Dendritic cell treated with granulocyte-macrophage colony-stimulating factor and Interleukin-4, amounts not matched to agents 40 ng/mL and 50 ng/mL, for 4 days (primary cell): ENCODE measurements at regions of chr7 and their contacts with region 1.

Region 1: DNA sequence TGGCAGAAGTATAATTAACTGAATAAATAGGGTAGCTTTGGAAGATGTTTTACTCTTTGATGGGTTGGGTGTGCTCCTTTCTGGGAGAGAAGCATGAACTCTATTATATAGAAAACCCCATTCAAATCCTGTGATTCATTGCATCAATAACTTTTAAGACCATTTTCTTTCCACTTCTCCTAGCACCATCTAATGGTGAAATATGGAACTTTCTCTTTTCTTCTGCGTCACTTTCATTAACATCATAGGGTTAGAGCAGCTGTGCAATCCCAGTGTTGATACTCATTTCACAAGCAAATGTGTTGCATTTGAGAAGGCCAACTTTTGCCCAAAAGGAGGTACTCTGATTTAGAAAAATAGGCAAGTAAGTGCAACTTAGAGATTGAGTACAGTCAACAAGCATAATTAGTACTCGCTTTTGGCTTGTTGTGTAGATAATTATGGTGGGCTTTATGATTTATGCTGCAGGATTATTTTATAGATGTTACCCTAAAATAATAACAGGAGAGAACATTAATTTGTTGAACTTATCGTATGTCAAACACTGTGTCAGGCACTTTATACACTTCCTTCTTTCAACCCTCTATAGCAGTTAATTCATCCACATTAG is 92.9 kb downstream of the CPED1 start:
- H3K4me3 Mint-ChIP-seq: no peak overlapping the region
- H3K27ac Mint-ChIP-seq: no peak overlapping the region
- H3K4me1 Mint-ChIP-seq: peaks cover 6% of the 10 kb centered on the region
- H3K27me3 Mint-ChIP-seq: no peaks in the 10 kb centered on the region

Region 2: DNA sequence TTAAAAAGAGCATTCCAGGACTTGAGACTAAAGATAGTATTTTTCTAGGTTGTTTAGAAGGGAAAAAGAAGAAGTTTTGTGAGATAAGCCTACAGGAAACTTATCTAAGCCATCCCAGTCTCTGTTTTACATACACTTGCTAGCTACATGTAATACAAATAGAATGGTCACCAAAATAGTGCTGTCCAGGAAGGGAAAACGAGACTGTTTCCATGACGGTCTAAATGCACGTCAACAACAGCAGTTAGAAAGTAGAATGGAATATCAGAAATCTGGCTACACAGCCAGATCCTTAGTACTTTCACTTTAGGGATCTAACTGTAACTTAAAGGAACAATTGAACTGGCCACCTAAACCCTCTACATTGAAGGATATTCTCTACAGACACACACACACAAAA is 341.1 kb before region 1 on chr7:
- intact Hi-C with region 1: no loop called
- H3K4me3 Mint-ChIP-seq: no peak overlapping the region
- H3K27ac Mint-ChIP-seq: no peak overlapping the region
- H3K4me1 Mint-ChIP-seq: no peaks in the 10 kb centered on the region
- H3K27me3 Mint-ChIP-seq: no peaks in the 10 kb centered on the region

Region 3: DNA sequence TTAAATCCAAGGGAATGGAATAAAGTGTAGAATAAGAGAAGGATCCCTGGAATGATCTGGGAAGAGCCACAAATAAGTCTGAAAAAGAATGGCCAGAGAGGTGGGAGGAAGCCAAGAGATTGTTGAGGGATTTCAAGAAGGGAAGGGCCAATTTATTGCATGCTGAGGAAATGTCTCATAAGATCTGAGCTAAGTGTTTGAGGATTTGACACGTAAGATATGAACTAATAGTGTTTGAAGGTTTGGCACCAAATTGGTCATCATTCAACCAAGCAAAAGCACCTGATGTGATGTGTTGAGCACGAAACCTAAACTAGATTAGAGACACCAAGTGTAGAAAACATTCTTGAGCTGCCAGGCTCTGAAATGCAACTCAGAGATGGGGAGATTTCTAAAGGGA is 321.4 kb before region 1 on chr7:
- intact Hi-C with region 1: no loop called
- H3K4me3 Mint-ChIP-seq: no peak overlapping the region
- H3K27ac Mint-ChIP-seq: no peak overlapping the region
- H3K4me1 Mint-ChIP-seq: no peaks in the 10 kb centered on the region
- H3K27me3 Mint-ChIP-seq: peaks cover 4% of the 10 kb centered on the region

Region 4: DNA sequence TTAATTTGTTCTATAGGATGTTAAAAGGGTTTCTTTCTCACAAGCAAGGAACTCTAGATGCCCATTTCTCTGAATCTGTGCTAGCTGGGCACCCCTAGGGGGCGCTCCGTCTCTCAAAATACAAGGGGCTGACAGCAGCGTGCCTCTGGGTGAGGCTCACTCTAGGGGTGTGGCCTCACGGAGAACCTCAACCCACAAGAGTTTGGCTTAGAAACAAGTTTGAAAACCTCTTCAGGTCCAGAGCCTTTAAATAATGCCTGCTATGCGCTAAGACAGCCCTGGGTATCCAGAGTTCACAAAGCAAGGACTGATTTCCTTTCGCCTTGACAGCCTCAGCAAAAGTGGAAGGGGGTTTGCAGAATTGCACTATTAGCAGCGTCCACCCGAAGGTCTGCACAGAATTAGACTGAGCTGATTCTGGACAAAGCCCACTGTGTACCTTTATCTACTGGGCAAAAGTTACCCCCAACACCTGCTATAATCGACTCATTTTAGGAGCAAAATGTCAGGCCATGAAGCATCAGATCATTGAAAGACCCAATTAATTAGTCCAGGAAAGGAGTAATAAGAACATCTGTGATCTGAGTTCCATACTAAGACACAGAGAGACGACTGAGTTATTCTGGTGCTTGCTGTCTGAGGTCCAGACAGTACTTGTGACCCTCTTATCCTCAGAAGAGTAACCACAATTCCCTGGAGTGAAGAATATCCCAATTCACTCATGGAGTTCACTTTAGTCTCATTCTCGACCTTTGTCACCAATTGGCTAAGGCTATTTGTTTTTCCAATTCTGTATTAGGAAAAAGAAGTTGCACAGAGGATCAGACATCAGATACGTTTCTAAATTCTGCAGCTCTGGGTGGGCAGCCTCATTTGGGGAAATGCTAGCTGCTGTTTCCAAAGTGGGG is 93.5 kb before region 1 on chr7:
- intact Hi-C with region 1: loop called (anchors 1 kb)
- H3K4me3 Mint-ChIP-seq: peak overlapping the region; percentile 88
- H3K27ac Mint-ChIP-seq: peak overlapping the region; percentile 74
- H3K4me1 Mint-ChIP-seq: peaks cover 20% of the 10 kb centered on the region
- H3K27me3 Mint-ChIP-seq: peaks cover 7% of the 10 kb centered on the region

Region 5: DNA sequence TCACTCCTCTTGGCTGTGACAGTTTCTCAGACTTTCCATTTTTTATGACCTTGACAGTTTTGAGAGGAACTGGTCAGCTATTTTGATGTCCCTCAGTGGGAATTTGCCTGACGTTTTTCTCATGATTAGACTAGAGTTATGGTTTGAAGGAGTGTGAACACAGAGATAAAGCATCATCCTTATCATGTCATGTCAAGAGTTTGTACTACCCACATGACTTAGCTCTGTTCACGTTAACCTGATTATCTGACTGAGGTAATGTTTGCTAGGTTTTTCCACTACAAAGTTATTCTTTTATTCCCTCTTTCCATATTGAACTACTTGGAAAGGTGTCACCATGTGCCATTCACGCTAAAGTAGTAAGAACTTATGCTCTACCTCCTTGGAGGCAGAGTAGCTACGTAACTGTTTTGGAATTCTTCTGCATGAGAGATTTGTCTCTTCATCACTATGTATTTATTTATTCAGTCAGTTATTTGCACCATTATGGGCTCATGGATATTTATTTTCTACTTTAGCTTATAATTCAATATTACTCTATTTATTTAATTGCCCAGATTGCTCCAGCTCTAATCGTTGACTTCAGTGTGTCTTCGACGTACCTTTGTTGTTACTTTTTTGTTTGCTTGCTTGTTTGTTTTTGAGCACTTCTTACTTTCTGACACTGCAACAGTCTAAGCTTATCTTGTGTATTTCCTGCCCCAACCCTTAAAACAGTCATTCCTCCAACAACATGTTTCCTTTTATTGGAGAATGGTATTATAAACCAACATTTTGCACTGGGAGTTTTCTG is 42.5 kb before region 1 on chr7:
- intact Hi-C with region 1: loop called (anchors 5 kb)
- H3K4me3 Mint-ChIP-seq: no peak overlapping the region
- H3K27ac Mint-ChIP-seq: no peak overlapping the region
- H3K4me1 Mint-ChIP-seq: peaks cover 7% of the 10 kb centered on the region
- H3K27me3 Mint-ChIP-seq: no peaks in the 10 kb centered on the region

Region 6: GRCh38 chr7:121069346-121070100 is 11.9 kb before region 1 on chr7:
- intact Hi-C with region 1: no loop called
- H3K4me3 Mint-ChIP-seq: no peak overlapping the region
- H3K27ac Mint-ChIP-seq: no peak overlapping the region
- H3K4me1 Mint-ChIP-seq: peaks cover 11% of the 10 kb centered on the region
- H3K27me3 Mint-ChIP-seq: no peaks in the 10 kb centered on the region

Region 7: GRCh38 chr7:121344093-121344492 is 262.7 kb after region 1 on chr7:
- intact Hi-C with region 1: no loop called
- H3K4me3 Mint-ChIP-seq: no peak overlapping the region
- H3K27ac Mint-ChIP-seq: no peak overlapping the region
- H3K4me1 Mint-ChIP-seq: no peaks in the 10 kb centered on the region
- H3K27me3 Mint-ChIP-seq: no peaks in the 10 kb centered on the region